ENCODE measurements at regions of chr5 and their contacts with region 1.

Region 1: GRCh38 chr5:36739751-36740221 is 133.4 kb downstream of the SLC1A3 start:
- DNase-seq: peak; percentile 84
- H3K4me3 Mint-ChIP-seq: no peak overlapping the region
- H3K27ac Mint-ChIP-seq: no peak overlapping the region
- H3K4me1 Mint-ChIP-seq: peaks cover 4% of the 10 kb centered on the region
- H3K27me3 Mint-ChIP-seq: peaks cover 25% of the 10 kb centered on the region

Region 2: DNA sequence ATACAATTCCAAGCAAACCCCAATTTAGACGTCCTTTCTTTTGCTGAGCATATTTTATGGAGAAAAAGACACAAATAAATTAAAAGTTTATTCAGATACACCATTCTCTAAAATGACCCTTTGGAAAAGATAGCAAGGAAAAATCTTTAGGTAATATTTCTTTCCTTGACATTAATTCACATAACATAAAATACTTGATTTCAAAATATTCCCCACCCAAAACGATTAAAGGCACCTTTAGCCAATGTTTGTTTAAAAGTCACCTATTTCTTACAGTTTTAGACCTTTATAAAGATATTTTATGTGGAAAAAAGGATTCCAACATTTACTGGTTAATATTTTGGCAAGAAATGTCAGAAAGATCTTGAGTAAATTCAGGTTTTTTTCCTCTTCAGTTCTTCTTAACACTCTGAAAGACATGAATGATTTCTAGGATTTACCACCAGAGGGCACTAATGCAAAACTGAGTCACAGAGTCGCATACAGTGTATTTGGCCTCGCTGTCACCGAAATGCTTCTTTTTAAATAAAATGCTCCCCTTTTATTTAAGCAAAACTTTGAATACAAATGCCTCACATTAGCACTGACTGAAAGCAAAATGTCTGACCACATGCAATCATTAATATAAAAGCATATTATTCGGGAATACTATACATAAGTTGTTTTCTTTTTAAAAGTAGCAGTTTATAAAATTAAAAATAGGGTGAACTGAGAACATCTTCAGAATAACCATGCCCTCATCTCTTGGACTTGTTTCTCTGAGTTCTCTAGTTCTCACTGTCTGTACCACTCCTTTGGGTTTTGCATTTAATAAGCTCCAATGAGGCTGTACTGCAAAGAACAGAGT is 10.9 kb before region 1 on chr5:
- CTCF ChIA-PET with region 1: interaction called, 30 read pairs
- POLR2A ChIA-PET with region 1: no interaction called
- intact Hi-C with region 1: no loop called
- DNase-seq: no peak
- H3K4me3 Mint-ChIP-seq: no peak overlapping the region
- H3K27ac Mint-ChIP-seq: no peak overlapping the region
- H3K4me1 Mint-ChIP-seq: peaks cover 4% of the 10 kb centered on the region
- H3K27me3 Mint-ChIP-seq: peaks cover 5% of the 10 kb centered on the region

Region 3: DNA sequence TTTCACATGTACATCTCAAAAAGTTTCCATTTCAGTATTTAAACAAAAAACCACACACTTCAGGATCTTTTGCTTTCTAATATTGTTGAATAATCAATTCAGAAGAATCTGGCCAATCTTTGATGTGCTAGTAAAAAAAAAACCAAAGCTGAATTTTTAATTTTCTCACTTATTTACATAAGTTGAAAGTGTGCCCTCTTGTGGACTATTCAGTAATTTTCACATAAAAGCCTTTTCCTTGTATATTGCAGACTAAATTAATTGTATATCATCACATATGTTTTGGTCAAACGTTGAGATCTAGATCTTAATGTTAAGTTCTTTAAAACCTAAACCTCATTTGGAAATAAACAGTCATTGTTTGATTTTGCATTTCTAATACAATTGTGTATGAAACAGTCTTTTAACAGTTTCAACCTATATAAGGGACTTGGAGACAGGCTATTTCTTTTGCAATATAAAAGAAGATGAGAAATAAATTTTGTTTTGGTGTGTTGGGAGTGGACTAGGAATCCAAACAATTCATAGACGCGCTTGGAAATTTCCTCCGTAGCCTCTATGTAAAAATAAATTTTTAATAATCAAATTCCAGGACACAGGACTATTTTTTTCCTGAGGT is 204.9 kb after region 1 on chr5:
- CTCF ChIA-PET with region 1: interaction called, 11 read pairs
- POLR2A ChIA-PET with region 1: no interaction called
- intact Hi-C with region 1: loop called (anchors 1 kb)
- DNase-seq: no peak
- H3K4me3 Mint-ChIP-seq: no peak overlapping the region
- H3K27ac Mint-ChIP-seq: no peak overlapping the region
- H3K4me1 Mint-ChIP-seq: peaks cover 40% of the 10 kb centered on the region
- H3K27me3 Mint-ChIP-seq: no peaks in the 10 kb centered on the region

Region 4: GRCh38 chr5:37005946-37006540 is 266.3 kb after region 1 on chr5:
- CTCF ChIA-PET with region 1: interaction called, 24 read pairs
- POLR2A ChIA-PET with region 1: no interaction called
- intact Hi-C with region 1: loop called (anchors 1 kb)
- DNase-seq: no peak
- H3K4me3 Mint-ChIP-seq: no peak overlapping the region
- H3K27ac Mint-ChIP-seq: no peak overlapping the region
- H3K4me1 Mint-ChIP-seq: no peaks in the 10 kb centered on the region
- H3K27me3 Mint-ChIP-seq: no peaks in the 10 kb centered on the region

Measured in activated CD4-positive, alpha-beta memory T cell treated with anti-CD3 and anti-CD28 coated beads for 36 hours (primary cell).